Activated CD4-positive, alpha-beta T cell treated with anti-CD3 and anti-CD28 coated beads, Interleukin-2, amount 10 ng/mL, durations not matched to agents 24 days and 14 days (primary cell): ENCODE measurements at regions of chr2 and their contacts with region 1.

Region 1: GRCh38 chr2:241859436-241860183 is 916 bp upstream of the PDCD1 start:
- DNase-seq: peak; percentile 86
- H3K4me3 Mint-ChIP-seq: peak overlapping the region; percentile 89
- H3K27ac Mint-ChIP-seq: peak overlapping the region; percentile 91
- H3K4me1 Mint-ChIP-seq: peaks cover 55% of the 10 kb centered on the region
- H3K27me3 Mint-ChIP-seq: peaks cover 5% of the 10 kb centered on the region

Region 2: DNA sequence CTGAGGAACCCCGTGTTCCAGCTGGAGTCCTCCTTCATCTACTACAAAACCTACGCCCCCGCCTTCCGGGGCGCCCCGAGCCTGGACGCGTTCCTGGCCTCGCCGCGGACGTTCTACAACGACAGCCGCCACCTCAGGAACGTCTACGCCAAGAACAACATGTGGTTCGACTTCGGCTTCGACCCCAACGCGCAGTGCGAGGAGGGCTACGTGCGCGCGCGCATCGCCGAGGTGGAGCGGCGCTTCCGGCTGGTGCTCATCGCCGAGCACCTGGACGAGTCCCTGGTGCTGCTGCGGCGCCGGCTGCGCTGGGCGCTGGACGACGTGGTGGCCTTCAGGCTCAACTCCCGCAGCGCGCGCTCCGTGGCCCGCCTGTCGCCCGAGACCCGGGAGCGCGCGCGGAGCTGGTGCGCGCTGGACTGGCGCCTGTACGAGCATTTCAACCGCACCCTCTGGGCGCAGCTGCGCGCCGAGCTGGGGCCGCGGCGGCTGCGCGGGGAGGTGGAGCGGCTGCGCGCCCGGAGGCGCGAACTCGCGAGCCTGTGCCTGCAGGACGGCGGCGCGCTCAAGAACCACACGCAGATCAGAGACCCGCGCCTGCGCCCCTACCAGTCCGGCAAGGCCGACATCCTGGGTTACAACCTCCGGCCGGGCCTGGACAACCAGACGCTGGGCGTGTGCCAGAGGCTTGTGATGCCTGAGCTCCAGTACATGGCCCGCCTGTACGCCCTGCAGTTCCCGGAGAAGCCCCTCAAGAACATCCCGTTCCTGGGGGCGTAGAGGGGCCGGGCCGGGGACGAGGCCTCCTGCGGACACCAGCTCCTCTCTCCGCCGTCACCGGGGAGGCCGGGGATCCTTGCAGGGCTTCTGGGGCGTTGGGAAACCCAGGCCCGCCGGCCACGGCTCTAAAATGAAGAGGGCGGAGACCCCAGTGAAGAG is 56.0 kb before region 1 on chr2:
- intact Hi-C with region 1: loop called (anchors 5 kb)
- DNase-seq: peak; percentile 85
- H3K4me3 Mint-ChIP-seq: peak overlapping the region; percentile 78
- H3K27ac Mint-ChIP-seq: peak overlapping the region; percentile 60
- H3K4me1 Mint-ChIP-seq: peaks cover 9% of the 10 kb centered on the region
- H3K27me3 Mint-ChIP-seq: peaks cover 2% of the 10 kb centered on the region

Region 3: DNA sequence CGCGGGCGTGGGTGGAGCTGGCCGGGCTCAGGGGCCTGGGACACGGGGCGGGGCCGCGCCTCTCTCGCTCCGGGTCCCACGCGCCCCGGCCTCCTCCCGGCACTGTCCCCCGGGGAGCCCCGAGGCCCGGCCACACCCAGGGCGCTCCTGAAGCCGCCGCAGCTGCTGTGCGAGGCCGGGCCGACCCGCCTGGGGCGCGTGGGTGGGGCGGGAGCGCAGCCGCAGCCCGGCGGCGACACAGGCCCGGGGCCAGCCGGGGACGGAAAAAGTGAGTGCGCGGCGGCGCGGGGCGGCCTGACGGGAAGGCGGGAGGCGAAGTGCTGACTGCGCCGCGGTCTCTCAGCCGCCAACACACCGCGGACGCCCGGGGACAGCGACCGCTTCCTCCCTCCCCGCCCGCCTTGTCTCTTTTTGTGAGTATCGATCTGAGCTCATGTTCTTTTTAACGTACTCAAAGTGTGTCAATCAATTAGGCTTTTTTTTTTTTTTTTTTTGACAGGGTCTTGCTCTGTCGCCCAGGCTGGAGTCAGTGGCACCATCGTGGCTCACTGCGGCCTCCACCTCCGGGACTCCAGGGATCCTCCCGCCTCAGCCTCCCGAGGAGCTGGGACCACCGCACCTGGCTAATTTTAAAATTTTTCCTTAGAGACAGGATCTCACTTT is 15.4 kb before region 1 on chr2:
- intact Hi-C with region 1: loop called (anchors 1 kb)
- DNase-seq: peak; percentile 95
- H3K4me3 Mint-ChIP-seq: peak overlapping the region; percentile 73
- H3K27ac Mint-ChIP-seq: peak overlapping the region; percentile 89
- H3K4me1 Mint-ChIP-seq: peaks cover 34% of the 10 kb centered on the region
- H3K27me3 Mint-ChIP-seq: peaks cover 3% of the 10 kb centered on the region